Transverse colon (tissue), 4 donors: ENCODE measurements at regions of chr14 and their contacts with region 1.

Region 1: DNA sequence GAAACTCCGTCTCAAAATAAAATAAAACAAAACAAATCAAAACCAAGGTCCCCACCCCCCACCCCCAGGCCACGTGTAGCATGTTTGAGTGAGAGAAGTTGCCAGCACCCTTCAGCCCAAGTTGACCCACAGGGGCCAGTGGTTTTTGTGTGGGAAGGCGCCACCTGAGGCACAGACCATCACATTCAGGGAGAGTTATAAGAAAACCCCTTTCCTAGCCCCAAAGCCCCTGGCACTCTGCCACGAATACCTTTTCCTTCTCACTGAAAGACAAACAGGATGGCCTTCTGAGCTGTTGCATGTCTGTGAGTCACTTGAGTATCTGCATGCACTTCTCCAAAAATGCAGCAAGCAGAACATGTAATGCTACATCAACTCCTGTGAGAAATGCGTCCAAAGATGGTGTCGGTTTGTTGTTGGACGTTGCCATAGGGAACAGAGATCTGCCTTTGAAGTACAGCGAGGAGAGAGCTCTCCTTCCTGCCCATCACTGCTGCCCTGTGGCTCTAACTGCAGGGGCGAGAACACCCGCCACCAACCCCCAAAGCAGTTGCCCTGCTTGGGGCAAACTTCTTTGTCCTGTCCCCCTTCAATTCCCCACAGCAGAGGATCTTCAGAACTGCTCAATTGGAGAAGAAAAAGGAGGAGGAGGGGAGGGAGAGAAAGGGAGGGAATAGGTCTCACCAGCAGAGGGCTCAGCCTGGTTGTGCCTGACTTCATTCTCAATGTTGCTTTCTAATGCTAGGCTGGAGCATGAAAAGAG is 2.7 kb upstream of the TRAF3 start:
- DNase-seq: peak; percentile 64
- H3K4me3 ChIP-seq: no peak overlapping the region
- H3K27ac ChIP-seq: peak overlapping the region; percentile 2 to 86 (median 68)
- H3K4me1 ChIP-seq: peaks cover 0 to 30% (median 12%) of the 10 kb centered on the region in 4 donors
- H3K27me3 ChIP-seq: no peaks in the 10 kb centered on the region
- CTCF ChIP-seq: peak; percentile 70 to 87 (median 71)
- EP300 ChIP-seq: no peak
- POLR2A ChIP-seq: no peak

Region 2: GRCh38 chr14:101535232-101535631 is 1239.3 kb before region 1 on chr14:
- in situ Hi-C with region 1: no loop called
- intact Hi-C with region 1: no loop called
- DNase-seq: peak; percentile 27
- H3K4me3 ChIP-seq: no peak overlapping the region
- H3K27ac ChIP-seq: no peak overlapping the region
- H3K4me1 ChIP-seq: peaks cover 0 to 9% (median 0%) of the 10 kb centered on the region in 4 donors
- H3K27me3 ChIP-seq: no peaks in the 10 kb centered on the region
- CTCF ChIP-seq: no peak
- EP300 ChIP-seq: no peak
- POLR2A ChIP-seq: no peak

Region 3: DNA sequence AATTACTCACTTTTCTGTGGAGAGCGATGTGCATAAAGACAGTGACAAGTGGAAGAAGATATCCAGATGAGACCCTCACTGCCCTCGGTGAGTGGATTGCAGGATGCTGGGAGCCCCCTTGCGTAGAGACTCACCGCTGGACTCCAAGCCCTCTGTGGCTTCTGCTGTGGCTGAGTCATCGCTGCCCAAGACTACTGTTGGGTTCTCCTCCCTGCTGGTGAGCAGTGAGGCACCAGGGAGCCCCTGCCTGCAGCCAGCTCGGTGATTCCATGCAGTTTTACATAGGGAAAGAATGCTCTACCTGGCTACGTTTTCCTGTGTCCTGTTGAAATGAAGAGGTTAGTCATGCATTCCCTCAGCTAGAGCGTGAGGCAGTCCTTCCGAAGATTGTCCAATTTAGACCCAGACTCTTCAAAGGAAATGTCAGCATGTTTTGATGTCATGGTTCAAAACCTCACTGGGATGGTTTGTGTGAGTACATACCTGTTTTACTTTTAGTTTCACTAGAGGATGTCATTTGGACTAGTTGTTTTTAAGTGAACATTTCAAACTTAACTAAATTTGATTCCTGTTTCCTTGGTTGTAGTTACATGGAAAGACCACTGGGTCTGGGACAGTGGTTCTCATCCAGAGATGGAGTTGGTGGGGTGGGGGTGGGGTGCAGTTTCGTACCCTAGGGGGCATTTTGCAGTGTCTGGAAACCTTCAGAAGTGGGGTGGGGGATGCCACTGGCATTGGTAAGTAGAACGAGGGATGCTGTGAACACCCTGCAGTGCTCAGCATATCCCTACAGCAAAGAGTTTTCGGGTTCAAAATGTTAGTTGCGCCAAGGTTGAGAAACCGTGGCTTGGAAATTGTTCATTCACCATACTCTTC is 31.0 kb after region 1 on chr14:
- in situ Hi-C with region 1: no loop called
- intact Hi-C with region 1: no loop called
- DNase-seq: peak; percentile 46
- H3K4me3 ChIP-seq: no peak overlapping the region
- H3K27ac ChIP-seq: peak overlapping the region in 3 of 4 donors; percentile 44 to 60 (median 49)
- H3K4me1 ChIP-seq: peaks cover 17 to 32% (median 20%) of the 10 kb centered on the region in 4 donors
- H3K27me3 ChIP-seq: no peaks in the 10 kb centered on the region
- CTCF ChIP-seq: no peak
- EP300 ChIP-seq: no peak
- POLR2A ChIP-seq: no peak

Region 4: DNA sequence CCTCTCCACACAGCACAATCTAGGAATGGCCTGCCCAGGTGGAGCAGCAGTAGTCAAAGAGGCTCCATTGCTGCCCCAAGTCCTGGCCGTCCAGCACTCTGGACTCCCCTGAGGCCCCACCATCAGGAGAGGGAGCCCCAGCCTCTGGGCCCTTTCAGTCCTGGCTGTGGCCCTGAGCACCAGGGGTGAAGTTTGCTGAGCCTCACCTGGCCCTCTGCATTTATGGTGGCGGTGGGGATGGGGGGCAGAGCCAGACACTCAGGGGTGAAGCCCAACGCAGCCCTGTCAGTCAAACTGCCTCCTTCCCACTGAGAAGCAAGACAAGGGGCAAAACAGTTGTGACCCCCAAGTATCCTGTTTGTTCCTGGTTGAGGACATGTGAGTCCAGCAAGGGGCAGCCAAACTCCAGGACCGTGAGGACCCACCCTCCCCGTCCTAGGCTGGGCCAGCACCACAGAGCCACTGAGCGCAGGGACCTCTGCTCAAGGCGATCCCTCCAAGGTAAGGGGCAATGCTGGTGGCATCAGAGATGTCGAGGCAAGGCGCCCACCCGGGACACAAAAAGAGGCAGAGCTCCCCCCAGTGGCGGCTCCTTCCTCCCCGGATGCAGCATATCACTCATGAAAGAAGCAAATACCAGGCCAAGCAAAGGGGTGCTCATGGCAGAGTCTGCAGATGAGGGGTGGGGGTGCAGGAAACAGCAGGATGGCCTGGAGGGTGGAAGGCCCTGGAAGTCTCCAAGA is 143.1 kb after region 1 on chr14:
- in situ Hi-C with region 1: loop called in 2 of 4 experiments (anchors 25 kb)
- intact Hi-C with region 1: loop called (anchors 10 kb)
- DNase-seq: peak; percentile 70
- H3K4me3 ChIP-seq: no peak overlapping the region
- H3K27ac ChIP-seq: no peak overlapping the region
- H3K4me1 ChIP-seq: peaks cover 0 to 4% (median 0%) of the 10 kb centered on the region in 4 donors
- H3K27me3 ChIP-seq: peaks cover 3% of the 10 kb centered on the region
- CTCF ChIP-seq: peak; percentile 41 to 58 (median 55)
- EP300 ChIP-seq: no peak
- POLR2A ChIP-seq: no peak